Calu3 (cell line): ENCODE measurements at regions of chr1 and their contacts with region 1.

Region 1: DNA sequence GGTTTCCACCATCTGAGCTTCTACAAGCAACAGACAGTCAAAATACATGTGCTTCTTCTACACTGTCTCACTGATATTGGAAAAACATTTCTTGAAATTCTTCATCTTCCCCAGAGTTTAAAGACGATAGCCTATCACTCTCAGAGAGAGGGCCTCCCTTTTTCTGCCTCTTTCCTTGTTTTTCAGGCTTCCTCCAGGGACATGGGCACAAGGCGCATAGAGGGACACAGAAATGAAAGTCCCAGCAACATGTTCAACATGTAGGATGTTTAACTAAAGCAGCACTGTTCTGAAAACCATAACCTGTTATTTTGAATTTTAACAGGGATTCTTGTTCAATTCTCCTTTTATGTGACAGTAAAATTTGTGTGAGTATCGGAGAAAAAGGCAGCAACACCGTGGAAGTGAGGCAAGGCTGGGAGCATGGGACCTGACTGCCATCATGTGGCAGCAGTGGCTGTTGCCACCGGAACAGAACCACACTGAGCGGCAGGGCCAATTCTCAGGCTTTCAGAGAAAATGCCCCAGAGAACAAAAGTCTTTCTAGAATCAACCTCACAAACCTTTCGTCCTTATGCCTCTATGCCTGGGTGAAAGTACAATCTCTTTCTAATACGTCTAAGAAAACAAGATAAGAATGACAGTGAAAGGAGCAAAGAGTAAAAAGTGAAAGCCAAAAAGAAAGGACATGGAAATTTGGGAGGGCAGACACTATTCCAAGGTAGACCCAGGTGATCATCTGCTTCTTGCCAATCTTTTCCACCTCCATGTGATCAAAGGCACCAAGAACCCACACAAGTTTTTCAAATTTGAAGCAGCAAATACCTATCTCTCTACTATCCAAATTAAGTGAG is 54.5 kb downstream of the PCNX2 start:
- DNase-seq: peak; percentile 54
- H3K4me3 Mint-ChIP-seq: peak overlapping the region; percentile 10
- H3K27ac Mint-ChIP-seq: peak overlapping the region; percentile 81
- H3K4me1 Mint-ChIP-seq: peaks cover 41% of the 10 kb centered on the region
- H3K27me3 Mint-ChIP-seq: no peaks in the 10 kb centered on the region
- CTCF ChIP-seq: peak; percentile 57

Region 2: GRCh38 chr1:231866392-231867331 is 1374.4 kb before region 1 on chr1:
- CTCF ChIA-PET with region 1: no interaction called
- intact Hi-C with region 1: loop called (anchors 1 kb)
- DNase-seq: peak; percentile 64
- H3K4me3 Mint-ChIP-seq: no peak overlapping the region
- H3K27ac Mint-ChIP-seq: no peak overlapping the region
- H3K4me1 Mint-ChIP-seq: peaks cover under 1% of the 10 kb centered on the region
- H3K27me3 Mint-ChIP-seq: no peaks in the 10 kb centered on the region
- CTCF ChIP-seq: peak; percentile 88

Region 3: DNA sequence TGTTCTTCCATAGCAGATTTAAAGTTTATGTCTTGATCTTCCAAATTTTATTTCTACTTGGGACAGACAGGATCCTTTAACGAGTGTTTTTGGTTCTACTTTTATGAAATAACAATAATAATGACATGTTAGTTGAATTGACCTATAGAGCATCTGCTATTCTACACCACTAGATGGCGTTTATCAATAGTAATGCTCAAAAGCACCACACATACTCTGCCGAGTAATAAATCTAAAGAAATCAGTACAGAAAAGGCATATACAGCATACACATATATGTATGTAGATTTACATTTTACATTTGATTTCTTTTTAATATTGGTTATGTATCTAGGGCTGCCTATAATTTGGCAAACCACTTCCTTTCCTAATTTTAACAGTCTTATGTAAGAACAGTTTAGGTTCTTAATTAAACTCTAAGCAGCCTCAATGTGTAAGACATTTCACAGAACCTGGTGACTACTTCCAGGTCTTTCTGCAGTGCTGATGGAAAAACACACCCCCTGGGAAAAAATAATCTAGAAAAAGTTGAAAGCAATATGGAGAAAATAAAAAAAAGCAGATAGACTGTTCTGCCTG is 605.2 kb before region 1 on chr1:
- CTCF ChIA-PET with region 1: no interaction called
- intact Hi-C with region 1: loop called (anchors 1 kb)
- DNase-seq: no peak
- H3K4me3 Mint-ChIP-seq: no peak overlapping the region
- H3K27ac Mint-ChIP-seq: no peak overlapping the region
- H3K4me1 Mint-ChIP-seq: no peaks in the 10 kb centered on the region
- H3K27me3 Mint-ChIP-seq: peaks cover 24% of the 10 kb centered on the region
- CTCF ChIP-seq: no peak

Region 4: GRCh38 chr1:232805269-232806185 is 435.5 kb before region 1 on chr1 and contains the start of gene MAP10:
- CTCF ChIA-PET with region 1: no interaction called
- intact Hi-C with region 1: loop called (anchors 5 kb)
- DNase-seq: peak; percentile 76
- H3K4me3 Mint-ChIP-seq: peak within 1 kb of the TSS; percentile 77
- H3K27ac Mint-ChIP-seq: peak within 1 kb of the TSS; percentile 59
- H3K4me1 Mint-ChIP-seq: peaks cover 18% of the 10 kb centered on the region
- H3K27me3 Mint-ChIP-seq: no peaks in the 10 kb centered on the region
- CTCF ChIP-seq: no peak
- total RNA-seq, gene MAP10: 1.5 and 1.9 TPM in 2 replicates

Region 5: GRCh38 chr1:232950197-232951176 is 290.6 kb before region 1 on chr1 and contains the start of gene NTPCR:
- CTCF ChIA-PET with region 1: no interaction called
- intact Hi-C with region 1: loop called (anchors 5 kb)
- DNase-seq: peak; percentile 98
- H3K4me3 Mint-ChIP-seq: peak within 1 kb of the TSS; percentile 91
- H3K27ac Mint-ChIP-seq: peak within 1 kb of the TSS; percentile 77
- H3K4me1 Mint-ChIP-seq: peaks cover 23% of the 10 kb centered on the region
- H3K27me3 Mint-ChIP-seq: peaks cover 11% of the 10 kb centered on the region
- CTCF ChIP-seq: no peak
- total RNA-seq, gene NTPCR: 38.2 and 39.2 TPM in 2 replicates

Region 6: DNA sequence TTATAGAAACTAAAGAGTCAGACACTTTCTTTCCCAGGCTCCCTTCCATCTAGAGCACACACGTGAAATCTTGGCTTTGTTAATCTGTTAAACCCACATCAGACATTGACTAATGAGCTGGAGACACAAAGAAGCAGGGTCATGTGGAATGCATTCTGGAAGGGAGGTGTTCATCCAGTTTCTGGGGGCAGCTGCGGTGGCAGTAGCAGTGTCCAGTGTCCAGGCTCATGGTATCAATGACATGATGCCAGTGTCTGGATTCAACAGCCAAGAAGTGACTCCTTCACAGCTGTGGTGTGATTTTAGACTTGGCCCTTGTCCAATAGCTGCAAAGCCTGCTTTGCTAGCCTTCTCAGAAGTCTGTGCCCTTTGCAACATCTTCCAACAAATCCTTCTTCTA is 195.5 kb before region 1 on chr1:
- CTCF ChIA-PET with region 1: no interaction called
- intact Hi-C with region 1: no loop called
- DNase-seq: no peak
- H3K4me3 Mint-ChIP-seq: no peak overlapping the region
- H3K27ac Mint-ChIP-seq: no peak overlapping the region
- H3K4me1 Mint-ChIP-seq: no peaks in the 10 kb centered on the region
- H3K27me3 Mint-ChIP-seq: no peaks in the 10 kb centered on the region
- CTCF ChIP-seq: no peak

Region 7: DNA sequence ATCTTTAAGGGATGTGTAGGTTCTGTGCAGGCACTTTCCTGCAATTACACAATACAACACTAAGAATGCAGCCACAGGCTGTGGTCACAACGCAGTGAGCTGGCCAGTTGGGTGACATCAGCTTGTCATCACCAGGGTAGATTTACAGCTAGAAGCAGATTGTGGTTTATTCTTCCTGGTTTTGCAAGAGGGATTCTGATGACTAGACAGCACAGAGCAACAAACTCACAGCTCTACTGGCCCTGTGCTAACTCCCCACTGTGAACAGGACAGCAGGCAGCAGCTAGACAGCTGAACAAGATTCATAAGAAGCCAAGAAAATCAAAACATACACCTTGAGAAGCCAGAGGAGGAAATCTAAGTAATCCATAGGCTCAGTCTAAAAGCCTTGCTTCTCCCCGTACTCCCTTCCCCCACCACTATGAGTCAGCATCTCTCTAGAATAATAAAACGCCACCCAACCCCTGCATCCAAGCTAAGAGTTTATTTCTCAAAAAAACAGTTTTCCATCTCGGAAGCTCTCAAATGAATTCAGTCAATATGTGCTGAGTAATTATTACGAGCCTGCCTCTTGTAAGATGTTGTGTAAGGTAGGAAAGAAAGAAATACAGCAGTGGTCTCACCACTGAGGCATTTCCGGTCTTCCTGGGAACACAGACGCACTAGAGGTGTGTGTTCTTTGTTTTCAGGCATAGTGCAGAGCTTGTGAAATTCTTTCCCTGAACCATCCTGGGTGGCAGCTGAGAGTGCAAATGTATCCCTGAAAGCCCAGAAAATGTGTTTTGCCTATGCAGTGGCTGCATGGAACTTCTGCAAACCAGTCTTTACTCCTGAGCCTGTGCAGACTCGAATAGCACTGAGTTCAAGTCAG is 127.8 kb before region 1 on chr1:
- CTCF ChIA-PET with region 1: no interaction called
- intact Hi-C with region 1: loop called (anchors 5 kb)
- DNase-seq: peak; percentile 79
- H3K4me3 Mint-ChIP-seq: peak overlapping the region; percentile 69
- H3K27ac Mint-ChIP-seq: peak overlapping the region; percentile 84
- H3K4me1 Mint-ChIP-seq: peaks cover 37% of the 10 kb centered on the region
- H3K27me3 Mint-ChIP-seq: no peaks in the 10 kb centered on the region
- CTCF ChIP-seq: no peak

Region 8: GRCh38 chr1:233261206-233261605 is 20.1 kb after region 1 on chr1:
- CTCF ChIA-PET with region 1: interaction called, 3 read pairs
- intact Hi-C with region 1: loop called (anchors 1 kb)
- DNase-seq: peak; percentile 24
- H3K4me3 Mint-ChIP-seq: peak overlapping the region; percentile 42
- H3K27ac Mint-ChIP-seq: peak overlapping the region; percentile 88
- H3K4me1 Mint-ChIP-seq: peaks cover 41% of the 10 kb centered on the region
- H3K27me3 Mint-ChIP-seq: no peaks in the 10 kb centered on the region
- CTCF ChIP-seq: no peak